ENCODE measurements at regions of chr11 and their contacts with region 1.

Region 1: GRCh38 chr11:124970925-124971324 is 16.9 kb downstream of the CCDC15 start:
- DNase-seq: no peak
- H3K4me3 ChIP-seq: no peak overlapping the region
- H3K27ac ChIP-seq: no peak overlapping the region
- H3K4me1 ChIP-seq: no peaks in the 10 kb centered on the region
- H3K27me3 ChIP-seq: no peaks in the 10 kb centered on the region
- CTCF ChIP-seq: no peak
- EP300 ChIP-seq: no peak
- POLR2A ChIP-seq: no peak

Region 2: GRCh38 chr11:124943254-124943616 is 27.7 kb before region 1 on chr11:
- in situ Hi-C with region 1: no loop called
- intact Hi-C with region 1: no loop called
- DNase-seq: no peak
- H3K4me3 ChIP-seq: no peak overlapping the region
- H3K27ac ChIP-seq: no peak overlapping the region
- H3K4me1 ChIP-seq: no peaks in the 10 kb centered on the region
- H3K27me3 ChIP-seq: peaks cover 12% of the 10 kb centered on the region
- CTCF ChIP-seq: no peak
- EP300 ChIP-seq: no peak
- POLR2A ChIP-seq: no peak

Region 3: DNA sequence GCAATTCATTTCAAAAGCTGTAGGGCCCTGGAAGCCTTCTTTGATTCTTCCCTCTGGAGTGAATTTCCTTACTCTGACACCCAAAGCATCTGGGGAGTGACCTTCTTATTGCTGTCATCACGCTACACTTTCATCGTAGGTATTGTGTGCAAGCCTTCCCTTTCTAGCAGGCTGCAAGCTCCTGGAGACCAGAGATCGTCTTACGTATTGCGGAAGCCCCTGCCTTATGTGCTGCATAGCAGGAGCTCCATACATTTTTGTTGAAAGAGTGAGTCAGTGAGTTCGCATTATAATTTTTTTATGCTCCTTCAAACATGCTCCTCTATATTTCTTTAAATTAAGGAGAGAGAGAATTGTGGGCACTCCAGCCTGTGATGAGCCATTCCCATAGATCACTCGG is 161.7 kb after region 1 on chr11:
- in situ Hi-C with region 1: loop called in 2 of 4 experiments (anchors 10 to 25 kb)
- intact Hi-C with region 1: no loop called
- DNase-seq: no peak
- H3K4me3 ChIP-seq: no peak overlapping the region
- H3K27ac ChIP-seq: no peak overlapping the region
- H3K4me1 ChIP-seq: no peaks in the 10 kb centered on the region
- H3K27me3 ChIP-seq: peaks cover 15% of the 10 kb centered on the region
- CTCF ChIP-seq: no peak
- EP300 ChIP-seq: no peak
- POLR2A ChIP-seq: no peak

Region 4: DNA sequence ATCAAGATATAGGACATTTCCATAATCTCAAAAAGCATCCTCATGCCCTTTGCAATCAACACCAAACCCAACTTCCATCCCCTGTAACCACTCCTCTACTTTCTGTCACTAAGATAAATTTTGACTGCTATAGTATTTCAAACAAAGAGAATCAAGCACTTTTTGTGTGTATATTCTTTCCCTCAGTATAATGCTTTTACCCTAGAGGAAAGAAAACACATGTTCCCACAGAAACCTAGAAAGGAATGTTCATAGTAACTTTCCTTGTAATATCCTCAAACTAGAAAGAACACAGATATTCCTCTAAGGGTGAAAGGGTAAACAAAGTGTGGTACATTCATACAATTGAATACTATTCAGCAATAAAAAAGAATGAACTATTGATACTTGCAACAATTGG is 769.7 kb after region 1 on chr11:
- in situ Hi-C with region 1: no loop called
- intact Hi-C with region 1: no loop called
- DNase-seq: no peak
- H3K4me3 ChIP-seq: no peak overlapping the region
- H3K27ac ChIP-seq: no peak overlapping the region
- H3K4me1 ChIP-seq: no peaks in the 10 kb centered on the region
- H3K27me3 ChIP-seq: no peaks in the 10 kb centered on the region
- CTCF ChIP-seq: no peak
- EP300 ChIP-seq: no peak
- POLR2A ChIP-seq: no peak

Measured in transverse colon (tissue), 4 donors.